Natural killer cell (primary cell): ENCODE measurements at regions of chr16 and their contacts with region 1.

Region 1: DNA sequence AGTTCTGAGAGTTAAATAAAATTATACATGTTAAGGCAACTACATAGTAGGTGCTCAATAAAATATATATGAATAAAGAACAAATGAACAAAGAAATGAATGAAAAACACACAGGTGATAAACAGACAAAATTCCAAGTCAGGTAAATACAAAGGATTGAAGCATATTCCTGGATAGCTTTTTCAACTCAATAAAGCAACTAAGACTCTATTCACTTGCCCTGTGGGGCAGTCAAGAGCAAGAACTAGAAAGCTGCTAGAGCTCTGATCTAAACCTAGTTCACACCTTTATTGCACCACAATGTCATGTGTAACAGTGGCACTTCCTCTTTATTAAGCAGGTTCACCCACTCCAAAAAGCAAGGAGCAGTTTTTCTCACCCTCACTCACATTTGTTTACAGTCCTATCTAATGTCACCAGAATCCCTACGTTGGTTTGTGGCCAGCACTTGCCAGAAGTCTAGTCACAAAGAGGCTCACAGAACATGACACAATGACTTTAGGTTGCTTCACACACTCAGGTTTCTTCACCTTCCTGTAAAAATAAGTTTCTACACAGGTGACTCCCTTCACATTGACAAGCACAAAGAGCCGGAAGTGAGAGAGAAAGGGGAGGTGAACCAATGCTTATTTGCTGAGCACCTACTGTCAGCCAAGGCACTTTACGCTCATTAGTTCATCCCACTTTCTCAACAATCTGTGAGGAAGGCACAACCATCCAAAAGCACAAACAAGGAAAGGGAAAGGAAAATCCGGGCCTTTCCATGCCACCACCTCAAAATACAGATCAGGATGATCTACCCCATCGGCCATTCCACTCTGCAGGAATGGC is 70.8 kb downstream of the XPO6 start:
- DNase-seq: peak; percentile 67 to 95
- ATAC-seq: peak; percentile 66 to 88 (median 79)
- H3K4me3 ChIP-seq: peak overlapping the region; percentile 35
- H3K4me3 Mint-ChIP-seq: peak overlapping the region; percentile 89
- H3K27ac ChIP-seq: peak overlapping the region; percentile 98
- H3K27ac Mint-ChIP-seq: peak overlapping the region; percentile 93 to 98
- H3K4me1 ChIP-seq: peaks cover 74% of the 10 kb centered on the region
- H3K4me1 Mint-ChIP-seq: peaks cover 82% of the 10 kb centered on the region in 2 donors
- H3K27me3 ChIP-seq: no peaks in the 10 kb centered on the region
- H3K27me3 Mint-ChIP-seq: no peaks in the 10 kb centered on the region
- CTCF ChIP-seq: peak; percentile 43

Region 2: GRCh38 chr16:27332105-27332504 is 808.9 kb before region 1 on chr16:
- intact Hi-C with region 1: no loop called
- DNase-seq: no peak
- ATAC-seq: no peak
- H3K4me3 ChIP-seq: no peak overlapping the region
- H3K4me3 Mint-ChIP-seq: no peak overlapping the region
- H3K27ac ChIP-seq: no peak overlapping the region
- H3K27ac Mint-ChIP-seq: no peak overlapping the region
- H3K4me1 ChIP-seq: peaks cover 5% of the 10 kb centered on the region
- H3K4me1 Mint-ChIP-seq: peaks cover 18 to 21% of the 10 kb centered on the region in 2 donors
- H3K27me3 ChIP-seq: no peaks in the 10 kb centered on the region
- H3K27me3 Mint-ChIP-seq: no peaks in the 10 kb centered on the region
- CTCF ChIP-seq: no peak

Region 3: GRCh38 chr16:28187595-28188004 is 46.6 kb after region 1 on chr16:
- intact Hi-C with region 1: loop called (anchors 1 kb)
- DNase-seq: peak in 1 of 2 donors; percentile 70
- ATAC-seq: peak; percentile 64 to 71 (median 65)
- H3K4me3 ChIP-seq: no peak overlapping the region
- H3K4me3 Mint-ChIP-seq: peak overlapping the region; percentile 83
- H3K27ac ChIP-seq: peak overlapping the region; percentile 76
- H3K27ac Mint-ChIP-seq: peak overlapping the region; percentile 94 to 96
- H3K4me1 ChIP-seq: peaks cover 40% of the 10 kb centered on the region
- H3K4me1 Mint-ChIP-seq: peaks cover 77 to 88% of the 10 kb centered on the region in 2 donors
- H3K27me3 ChIP-seq: no peaks in the 10 kb centered on the region
- H3K27me3 Mint-ChIP-seq: no peaks in the 10 kb centered on the region
- CTCF ChIP-seq: no peak

Region 4: GRCh38 chr16:28211712-28212534 is 70.9 kb after region 1 on chr16 and contains the start of gene XPO6:
- intact Hi-C with region 1: loop called (anchors 1 kb)
- DNase-seq: peak; percentile 98 to 99
- ATAC-seq: peak; percentile 87 to 98 (median 89)
- H3K4me3 ChIP-seq: peak within 1 kb of the TSS; percentile 79
- H3K4me3 Mint-ChIP-seq: peak within 1 kb of the TSS; percentile 94
- H3K27ac ChIP-seq: peak within 1 kb of the TSS; percentile 78
- H3K27ac Mint-ChIP-seq: peak within 1 kb of the TSS; percentile 84 to 89
- H3K4me1 ChIP-seq: peaks cover 32% of the 10 kb centered on the region
- H3K4me1 Mint-ChIP-seq: peaks cover 41% of the 10 kb centered on the region in 2 donors
- H3K27me3 ChIP-seq: no peaks in the 10 kb centered on the region
- H3K27me3 Mint-ChIP-seq: no peaks in the 10 kb centered on the region
- CTCF ChIP-seq: no peak
- total RNA-seq, gene XPO6: 233 to 321 (median 240) TPM

Region 5: DNA sequence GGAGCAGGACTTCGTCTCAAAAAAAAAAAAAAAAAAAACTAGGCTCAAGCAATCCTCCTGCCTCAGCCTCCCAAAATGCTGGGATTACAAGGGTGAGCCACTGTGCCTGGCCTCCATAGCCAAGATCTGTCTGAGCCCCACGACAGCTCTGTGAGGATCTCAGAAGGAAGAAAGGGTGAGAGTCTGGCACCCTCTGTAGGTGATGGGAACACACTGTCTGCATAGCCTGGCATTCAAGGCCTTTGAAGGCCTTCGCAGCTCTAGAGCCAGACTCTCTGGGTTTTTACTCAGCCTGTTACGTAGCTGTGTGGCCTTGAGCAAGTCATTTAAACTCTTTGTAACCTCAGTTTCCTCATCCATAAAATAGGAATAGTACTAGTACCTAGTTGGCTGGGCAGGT is 77.1 kb after region 1 on chr16:
- intact Hi-C with region 1: loop called (anchors 1 kb)
- DNase-seq: peak; percentile 35 to 89
- ATAC-seq: peak; percentile 95 to 100 (median 100)
- H3K4me3 ChIP-seq: no peak overlapping the region
- H3K4me3 Mint-ChIP-seq: no peak overlapping the region
- H3K27ac ChIP-seq: no peak overlapping the region
- H3K27ac Mint-ChIP-seq: no peak overlapping the region
- H3K4me1 ChIP-seq: no peaks in the 10 kb centered on the region
- H3K4me1 Mint-ChIP-seq: no peaks in the 10 kb centered on the region
- H3K27me3 ChIP-seq: no peaks in the 10 kb centered on the region
- H3K27me3 Mint-ChIP-seq: no peaks in the 10 kb centered on the region
- CTCF ChIP-seq: peak; percentile 51

Region 6: DNA sequence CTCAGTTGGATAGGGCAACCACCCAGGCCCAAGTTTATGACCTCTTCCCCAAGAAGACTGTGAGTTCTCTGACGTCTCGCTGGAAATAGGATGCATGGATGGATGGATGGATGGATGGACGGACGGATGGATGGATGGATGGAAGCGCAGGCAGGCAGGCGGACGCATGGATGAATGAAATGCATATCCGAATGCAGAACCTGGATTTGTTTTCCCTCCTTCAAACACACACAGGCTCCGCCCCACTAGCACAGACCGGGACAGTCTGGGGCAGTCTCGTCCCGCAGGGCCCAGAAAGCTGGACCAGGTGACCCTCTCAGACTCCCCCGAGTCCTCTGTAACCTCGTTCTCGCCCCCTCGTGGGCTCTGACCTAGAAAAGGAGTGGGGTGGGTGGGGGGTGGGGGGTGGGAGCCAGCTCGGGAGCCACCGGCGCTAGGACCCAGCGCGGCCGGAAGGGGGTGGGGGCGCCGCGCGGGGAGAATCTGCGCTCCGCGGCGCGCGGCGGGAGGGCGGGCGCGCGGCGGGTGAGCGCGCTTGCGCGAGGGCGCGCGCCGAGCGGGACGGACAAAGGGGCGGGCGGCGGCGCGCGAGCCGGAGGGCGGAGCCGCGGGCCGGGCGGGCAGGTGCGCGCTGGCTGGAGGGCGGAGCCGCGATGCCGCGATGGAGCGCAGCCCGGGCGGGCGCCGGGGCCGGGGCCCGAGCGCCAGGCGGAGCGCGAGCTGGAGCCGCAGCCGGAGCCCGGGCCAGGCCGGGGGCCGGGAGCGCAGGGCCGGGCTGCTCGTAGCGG is 151.1 kb after region 1 on chr16 and contains the start of gene SBK1:
- intact Hi-C with region 1: loop called (anchors 5 kb)
- DNase-seq: peak; percentile 88 to 95
- ATAC-seq: peak; percentile 94 to 96 (median 96)
- H3K4me3 ChIP-seq: peak within 1 kb of the TSS; percentile 96
- H3K4me3 Mint-ChIP-seq: peak within 1 kb of the TSS; percentile 93
- H3K27ac ChIP-seq: peak within 1 kb of the TSS; percentile 72
- H3K27ac Mint-ChIP-seq: peak within 1 kb of the TSS; percentile 72 to 85
- H3K4me1 ChIP-seq: peaks cover 82% of the 10 kb centered on the region
- H3K4me1 Mint-ChIP-seq: peaks cover 71 to 76% of the 10 kb centered on the region in 2 donors
- H3K27me3 ChIP-seq: no peaks in the 10 kb centered on the region
- H3K27me3 Mint-ChIP-seq: no peaks in the 10 kb centered on the region
- CTCF ChIP-seq: no peak
- total RNA-seq, gene SBK1: 59.3 to 60.9 (median 59.8) TPM

Region 7: DNA sequence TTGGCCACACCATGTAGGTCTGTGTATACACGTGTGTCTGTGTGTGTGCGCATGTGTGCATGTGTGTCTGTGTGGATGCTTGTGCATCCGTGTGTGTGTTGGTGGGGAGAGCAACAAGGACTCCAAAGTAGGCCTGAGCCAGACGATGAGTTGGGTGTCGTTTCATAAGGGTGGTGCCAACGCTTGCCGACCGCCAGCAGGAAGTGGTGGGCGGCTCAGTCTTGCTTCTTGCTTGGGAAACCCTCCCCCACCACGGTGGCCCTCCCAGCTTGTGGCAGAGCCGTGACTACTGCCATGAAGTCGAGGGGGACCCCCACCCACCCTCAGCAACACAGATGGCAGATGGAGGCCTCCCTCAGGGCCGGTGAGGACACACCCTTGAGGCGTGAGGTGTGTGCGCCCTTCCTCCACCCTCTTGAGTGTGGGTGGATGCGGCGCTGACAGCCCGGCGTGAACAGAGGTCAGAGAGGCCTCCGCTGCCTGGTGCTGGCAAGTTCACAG is 168.9 kb after region 1 on chr16:
- intact Hi-C with region 1: loop called (anchors 5 kb)
- DNase-seq: peak; percentile 87 to 93
- ATAC-seq: peak; percentile 88 to 93 (median 90)
- H3K4me3 ChIP-seq: no peak overlapping the region
- H3K4me3 Mint-ChIP-seq: peak overlapping the region; percentile 52
- H3K27ac ChIP-seq: peak overlapping the region; percentile 90
- H3K27ac Mint-ChIP-seq: peak overlapping the region; percentile 97 to 99
- H3K4me1 ChIP-seq: peaks cover 69% of the 10 kb centered on the region
- H3K4me1 Mint-ChIP-seq: peaks cover 62 to 78% of the 10 kb centered on the region in 2 donors
- H3K27me3 ChIP-seq: no peaks in the 10 kb centered on the region
- H3K27me3 Mint-ChIP-seq: no peaks in the 10 kb centered on the region
- CTCF ChIP-seq: no peak

Region 8: GRCh38 chr16:28491970-28492474 is 351.0 kb after region 1 on chr16 and contains the start of gene CLN3:
- intact Hi-C with region 1: loop called (anchors 1 kb)
- DNase-seq: peak; percentile 84 to 94
- ATAC-seq: peak; percentile 58 to 82 (median 69)
- H3K4me3 ChIP-seq: peak within 1 kb of the TSS; percentile 83
- H3K4me3 Mint-ChIP-seq: peak within 1 kb of the TSS; percentile 99
- H3K27ac ChIP-seq: peak within 1 kb of the TSS; percentile 96
- H3K27ac Mint-ChIP-seq: peak within 1 kb of the TSS; percentile 98 to 100
- H3K4me1 ChIP-seq: peaks cover 80% of the 10 kb centered on the region
- H3K4me1 Mint-ChIP-seq: peaks cover 45 to 74% of the 10 kb centered on the region in 2 donors
- H3K27me3 ChIP-seq: no peaks in the 10 kb centered on the region
- H3K27me3 Mint-ChIP-seq: no peaks in the 10 kb centered on the region
- CTCF ChIP-seq: no peak
- total RNA-seq, gene CLN3: 71.1 to 85.3 (median 84.7) TPM